Activated naive CD4-positive, alpha-beta T cell treated with anti-CD3 and anti-CD28 coated beads, Interleukin-2, amount 10 ng/mL, durations not matched to agents 7 days and 5 days (primary cell): ENCODE measurements at regions of chr21 and their contacts with region 1.

Region 1: GRCh38 chr21:32940079-32941014 is 85.4 kb upstream of the OLIG2 start:
- DNase-seq: peak; percentile 54
- H3K4me3 Mint-ChIP-seq: no peak overlapping the region
- H3K27ac Mint-ChIP-seq: no peak overlapping the region
- H3K4me1 Mint-ChIP-seq: peaks cover 4% of the 10 kb centered on the region
- H3K27me3 Mint-ChIP-seq: peaks cover 17% of the 10 kb centered on the region

Region 2: DNA sequence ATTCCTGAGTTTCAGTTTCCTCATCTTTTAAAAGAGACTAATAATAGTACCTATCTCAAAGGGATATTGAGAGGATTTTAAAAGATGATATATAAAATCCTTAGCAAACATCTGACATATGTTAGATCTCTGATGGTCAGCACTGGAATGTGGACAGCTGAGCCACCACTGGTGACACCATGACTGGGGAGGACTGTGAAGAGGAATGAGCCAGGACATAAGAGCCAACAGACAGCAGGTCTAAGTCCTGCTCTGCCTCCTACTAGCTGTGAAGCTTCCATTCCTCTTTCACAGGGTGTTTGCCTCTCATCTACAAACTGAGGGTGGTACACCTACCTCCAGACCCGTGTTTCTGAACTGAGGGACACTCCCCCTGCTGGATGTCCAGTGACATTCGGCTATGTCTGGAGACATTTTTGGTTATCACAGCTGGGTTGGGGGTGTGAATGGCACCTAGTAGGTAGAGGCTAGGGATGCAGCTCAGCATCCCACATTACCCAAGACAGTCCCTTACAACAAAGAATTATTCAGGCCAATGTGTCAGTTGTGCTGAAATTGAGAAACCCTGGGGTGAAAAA is 23.7 kb before region 1 on chr21:
- CTCF ChIA-PET with region 1: interaction called, 28 read pairs
- DNase-seq: no peak
- H3K4me3 Mint-ChIP-seq: no peak overlapping the region
- H3K27ac Mint-ChIP-seq: no peak overlapping the region
- H3K4me1 Mint-ChIP-seq: peaks cover 22% of the 10 kb centered on the region
- H3K27me3 Mint-ChIP-seq: peaks cover 16% of the 10 kb centered on the region

Region 3: GRCh38 chr21:32921632-32922230 is 18.6 kb before region 1 on chr21:
- CTCF ChIA-PET with region 1: interaction called, 28 read pairs
- DNase-seq: peak; percentile 61
- H3K4me3 Mint-ChIP-seq: no peak overlapping the region
- H3K27ac Mint-ChIP-seq: no peak overlapping the region
- H3K4me1 Mint-ChIP-seq: no peaks in the 10 kb centered on the region
- H3K27me3 Mint-ChIP-seq: peaks cover 16% of the 10 kb centered on the region

Region 4: DNA sequence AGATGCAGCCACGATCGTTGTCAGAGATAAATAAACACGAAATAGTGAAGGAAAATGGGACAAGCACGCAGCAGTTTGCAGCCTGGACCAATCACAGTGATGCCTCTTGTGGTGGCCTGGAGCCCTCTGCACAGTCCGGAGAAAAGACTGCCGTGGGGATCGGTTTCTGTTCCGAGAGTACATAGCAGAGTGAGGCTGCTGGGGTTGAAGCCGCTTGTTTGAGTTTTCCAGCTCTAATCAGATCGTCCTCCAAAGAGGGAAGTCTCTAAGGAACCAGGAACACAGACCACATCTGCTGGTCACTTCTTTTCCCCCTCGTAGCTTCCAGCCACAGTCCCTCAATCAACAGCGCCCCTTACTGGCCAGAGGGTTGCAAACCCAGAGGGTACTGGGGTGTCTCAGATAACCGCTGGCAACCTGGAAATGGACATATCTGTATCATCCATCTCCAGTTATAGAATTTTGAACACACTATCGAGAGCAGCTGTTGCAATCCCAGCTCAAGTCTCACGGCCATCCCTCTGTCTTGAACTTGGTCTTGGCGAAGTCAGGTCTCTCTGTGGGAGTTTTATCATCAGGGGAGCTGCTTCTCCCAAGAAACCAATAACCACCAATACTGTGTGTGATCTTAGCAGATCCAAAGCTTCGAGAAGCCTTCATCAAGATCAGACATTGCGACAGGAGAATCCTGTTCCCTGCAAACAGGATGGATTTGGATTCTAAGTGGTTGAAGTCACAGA is 187.0 kb after region 1 on chr21:
- CTCF ChIA-PET with region 1: interaction called, 14 read pairs
- DNase-seq: peak; percentile 76
- H3K4me3 Mint-ChIP-seq: peak overlapping the region; percentile 42
- H3K27ac Mint-ChIP-seq: no peak overlapping the region
- H3K4me1 Mint-ChIP-seq: peaks cover 5% of the 10 kb centered on the region
- H3K27me3 Mint-ChIP-seq: peaks cover 30% of the 10 kb centered on the region